Activated naive CD4-positive, alpha-beta T cell treated with anti-CD3 and anti-CD28 coated beads for 36 hours (primary cell): ENCODE measurements at regions of chr4 and their contacts with region 1.

Region 1: DNA sequence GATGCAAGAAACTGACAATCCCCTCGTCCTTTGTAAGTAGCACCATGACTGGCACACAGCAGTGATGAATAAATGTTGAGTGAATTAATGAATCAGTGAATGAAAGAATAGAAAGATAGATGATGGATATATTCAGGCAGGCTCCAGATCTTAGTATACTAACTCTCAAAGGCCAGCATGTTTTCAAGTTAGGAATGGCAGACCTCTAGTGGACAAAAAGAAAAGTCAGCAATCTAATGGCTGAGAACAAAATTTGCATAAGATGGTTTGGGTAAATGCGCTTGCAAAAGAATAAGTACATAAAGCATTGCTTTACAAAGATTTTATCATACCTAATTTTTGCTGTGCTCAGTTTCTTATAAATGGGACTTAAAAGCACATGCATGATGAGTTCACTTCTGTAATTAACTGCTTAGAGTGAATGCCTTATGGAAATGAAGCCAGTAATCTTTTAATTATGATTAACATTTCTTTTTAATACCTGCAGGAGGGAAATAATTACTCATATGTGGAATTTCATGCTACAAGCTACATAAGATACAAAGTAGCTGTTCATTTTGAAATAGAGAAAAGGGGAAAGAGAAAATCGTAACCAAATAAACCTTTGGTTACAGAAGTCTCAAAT is 126.9 kb upstream of the GPRIN3 start:
- DNase-seq: no peak
- H3K4me3 Mint-ChIP-seq: no peak overlapping the region
- H3K27ac Mint-ChIP-seq: no peak overlapping the region
- H3K4me1 Mint-ChIP-seq: peaks cover 14% of the 10 kb centered on the region
- H3K27me3 Mint-ChIP-seq: no peaks in the 10 kb centered on the region

Region 2: DNA sequence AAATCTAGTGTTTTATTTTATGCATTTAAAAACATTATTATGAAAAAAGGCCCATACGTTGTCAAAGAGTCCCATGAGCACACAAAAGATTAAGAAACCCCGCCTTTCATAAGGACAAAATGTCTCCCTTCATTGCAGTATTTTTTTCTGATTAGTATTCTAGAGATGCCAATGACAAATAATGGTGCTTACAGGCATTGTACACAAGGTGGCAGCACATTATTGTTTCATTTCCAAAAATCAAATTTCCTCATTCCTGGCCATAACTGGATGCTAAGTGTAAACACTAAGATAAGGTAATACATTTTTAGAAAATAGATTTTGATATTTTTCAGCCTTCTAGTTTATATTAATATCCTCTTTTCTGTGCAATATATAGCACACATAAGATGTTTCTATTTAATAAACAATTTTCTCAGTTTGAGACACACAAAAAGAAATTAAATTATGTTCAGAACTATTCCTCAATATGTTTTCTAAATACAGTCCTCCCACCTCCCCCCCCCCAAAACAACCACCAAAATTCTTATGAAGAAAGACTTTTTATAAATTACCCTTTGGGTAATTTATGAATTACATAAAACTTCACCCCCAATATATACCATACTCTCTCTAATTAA is 275.5 kb before region 1 on chr4:
- CTCF ChIA-PET with region 1: interaction called, 10 read pairs
- intact Hi-C with region 1: loop called (anchors 1 kb)
- DNase-seq: no peak
- H3K4me3 Mint-ChIP-seq: no peak overlapping the region
- H3K27ac Mint-ChIP-seq: no peak overlapping the region
- H3K4me1 Mint-ChIP-seq: no peaks in the 10 kb centered on the region
- H3K27me3 Mint-ChIP-seq: peaks cover 4% of the 10 kb centered on the region

Region 3: GRCh38 chr4:89226665-89227574 is 207.6 kb before region 1 on chr4:
- CTCF ChIA-PET with region 1: interaction called, 46 read pairs
- intact Hi-C with region 1: loop called (anchors 1 kb)
- DNase-seq: peak; percentile 90
- H3K4me3 Mint-ChIP-seq: peak overlapping the region; percentile 58
- H3K27ac Mint-ChIP-seq: no peak overlapping the region
- H3K4me1 Mint-ChIP-seq: peaks cover 11% of the 10 kb centered on the region
- H3K27me3 Mint-ChIP-seq: no peaks in the 10 kb centered on the region

Region 4: GRCh38 chr4:89469930-89470375 is 35.5 kb after region 1 on chr4:
- CTCF ChIA-PET with region 1: interaction called, 3 read pairs
- intact Hi-C with region 1: loop called (anchors 1 kb)
- DNase-seq: peak; percentile 54
- H3K4me3 Mint-ChIP-seq: peak overlapping the region; percentile 2
- H3K27ac Mint-ChIP-seq: peak overlapping the region; percentile 71
- H3K4me1 Mint-ChIP-seq: peaks cover 26% of the 10 kb centered on the region
- H3K27me3 Mint-ChIP-seq: no peaks in the 10 kb centered on the region

Region 5: GRCh38 chr4:89528526-89529133 is 94.2 kb after region 1 on chr4:
- CTCF ChIA-PET with region 1: no interaction called
- intact Hi-C with region 1: loop called (anchors 2 kb)
- DNase-seq: peak; percentile 8
- H3K4me3 Mint-ChIP-seq: no peak overlapping the region
- H3K27ac Mint-ChIP-seq: no peak overlapping the region
- H3K4me1 Mint-ChIP-seq: peaks cover 14% of the 10 kb centered on the region
- H3K27me3 Mint-ChIP-seq: peaks cover 31% of the 10 kb centered on the region

Region 6: GRCh38 chr4:89617317-89617716 is 182.8 kb after region 1 on chr4:
- CTCF ChIA-PET with region 1: no interaction called
- intact Hi-C with region 1: no loop called
- DNase-seq: no peak
- H3K4me3 Mint-ChIP-seq: no peak overlapping the region
- H3K27ac Mint-ChIP-seq: no peak overlapping the region
- H3K4me1 Mint-ChIP-seq: peaks cover 24% of the 10 kb centered on the region
- H3K27me3 Mint-ChIP-seq: no peaks in the 10 kb centered on the region

Region 7: DNA sequence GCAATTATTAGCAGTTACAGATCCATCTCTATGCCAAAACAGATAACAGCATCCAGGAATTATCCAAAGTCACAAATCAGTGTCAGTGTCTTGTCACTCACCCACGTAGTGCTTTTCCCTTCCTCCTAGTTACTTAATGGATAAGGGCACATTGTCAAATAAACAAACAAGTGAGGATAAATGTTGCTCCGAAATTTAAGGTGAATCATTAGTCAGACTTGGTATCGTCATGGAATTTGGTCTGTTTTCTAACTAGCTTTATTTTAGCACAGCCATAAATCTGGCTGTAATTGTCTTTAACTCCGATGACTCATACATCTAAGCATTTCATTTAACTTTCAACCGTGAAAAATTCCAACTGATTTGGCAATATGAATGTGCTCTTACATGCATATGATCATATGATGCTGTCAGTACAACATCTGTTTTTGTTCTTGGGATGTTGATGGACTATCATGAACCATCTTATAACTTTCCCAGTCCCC is 319.1 kb after region 1 on chr4:
- CTCF ChIA-PET with region 1: no interaction called
- intact Hi-C with region 1: no loop called
- DNase-seq: no peak
- H3K4me3 Mint-ChIP-seq: no peak overlapping the region
- H3K27ac Mint-ChIP-seq: no peak overlapping the region
- H3K4me1 Mint-ChIP-seq: no peaks in the 10 kb centered on the region
- H3K27me3 Mint-ChIP-seq: peaks cover 3% of the 10 kb centered on the region